Activated naive CD4-positive, alpha-beta T cell treated with anti-CD3 and anti-CD28 coated beads for 36 hours (primary cell): ENCODE measurements at regions of chr5 and their contacts with region 1.

Region 1: DNA sequence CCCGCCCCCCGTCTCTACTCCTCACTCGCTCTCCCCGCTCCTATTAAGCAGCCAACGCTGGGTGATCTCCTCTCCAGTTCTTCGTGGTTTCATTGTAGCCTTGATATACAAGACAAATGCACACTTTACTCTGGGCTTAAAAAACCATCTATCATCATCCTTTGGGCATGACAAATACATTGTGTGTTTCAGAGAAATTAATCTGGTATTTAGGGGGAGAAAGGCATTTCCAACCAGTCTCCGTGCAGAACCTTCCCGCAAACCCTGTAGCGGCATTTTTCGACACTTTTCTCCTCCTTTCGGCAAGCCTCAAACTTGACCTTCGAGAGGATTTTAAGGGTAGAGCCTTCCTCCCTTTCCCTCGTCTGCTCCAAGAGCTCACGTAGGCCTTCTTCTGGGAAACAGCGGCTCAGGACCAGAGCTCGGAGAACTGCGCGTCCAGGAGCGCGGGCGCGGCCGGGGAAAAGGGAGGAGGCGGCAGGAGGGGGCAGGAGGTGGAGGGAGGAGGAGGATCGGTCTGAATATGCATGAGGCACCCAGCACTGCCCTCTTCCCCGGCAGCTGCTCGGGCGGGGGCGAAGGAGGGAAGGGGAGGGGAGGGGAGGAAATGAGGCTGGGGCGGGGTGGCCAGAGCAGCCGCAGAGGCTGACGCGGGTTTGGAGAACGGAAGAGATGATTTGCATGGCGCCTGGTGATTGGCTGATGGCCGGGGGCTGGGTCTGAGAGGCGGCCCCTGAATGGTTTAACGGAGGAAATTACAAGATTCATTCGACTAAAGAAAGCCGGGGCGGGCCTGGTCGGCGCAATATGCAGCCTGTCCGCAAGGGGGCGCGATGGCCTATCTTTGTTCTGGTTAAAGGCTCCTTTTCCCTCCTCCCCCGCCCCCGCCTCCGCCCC is 127.5 kb downstream of the TMEM161B start:
- DNase-seq: peak; percentile 93
- H3K4me3 Mint-ChIP-seq: no peak overlapping the region
- H3K27ac Mint-ChIP-seq: no peak overlapping the region
- H3K4me1 Mint-ChIP-seq: peaks cover 9% of the 10 kb centered on the region
- H3K27me3 Mint-ChIP-seq: peaks cover 43% of the 10 kb centered on the region

Region 2: GRCh38 chr5:86617756-86618576 is 1523.1 kb before region 1 on chr5 and contains the start of gene COX7C:
- CTCF ChIA-PET with region 1: no interaction called
- intact Hi-C with region 1: loop called (anchors 10 kb)
- DNase-seq: peak; percentile 96
- H3K4me3 Mint-ChIP-seq: peak within 1 kb of the TSS; percentile 100
- H3K27ac Mint-ChIP-seq: peak within 1 kb of the TSS; percentile 99
- H3K4me1 Mint-ChIP-seq: peaks cover 21% of the 10 kb centered on the region
- H3K27me3 Mint-ChIP-seq: peaks cover 2% of the 10 kb centered on the region
- total RNA-seq, gene COX7C: 925 to 952 TPM

Region 3: DNA sequence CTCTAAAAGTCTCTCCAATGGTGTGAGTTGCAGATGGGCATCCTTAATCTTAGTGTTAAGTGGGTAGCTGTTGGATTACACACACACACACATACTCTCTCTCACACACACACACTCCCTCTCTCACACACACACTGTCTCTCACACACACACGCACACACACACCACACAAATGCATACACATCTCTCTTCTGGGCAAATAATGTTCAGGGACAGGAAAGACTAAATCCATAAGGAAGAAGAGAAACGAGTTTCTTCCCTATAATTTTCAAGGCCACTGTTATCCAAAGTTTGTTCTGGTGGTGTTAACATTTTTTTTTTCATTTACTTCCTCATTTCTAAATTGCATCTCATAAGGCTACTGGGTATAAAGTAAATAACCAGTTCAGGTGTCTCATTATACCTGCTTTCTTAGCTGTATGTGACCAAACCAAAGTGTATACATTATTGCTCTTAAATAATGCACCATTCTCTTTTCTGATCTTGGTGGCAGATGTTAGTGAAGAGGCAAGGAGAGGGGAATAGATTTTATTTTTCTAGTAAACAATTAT is 705.9 kb before region 1 on chr5:
- CTCF ChIA-PET with region 1: no interaction called
- intact Hi-C with region 1: no loop called
- DNase-seq: no peak
- H3K4me3 Mint-ChIP-seq: no peak overlapping the region
- H3K27ac Mint-ChIP-seq: no peak overlapping the region
- H3K4me1 Mint-ChIP-seq: no peaks in the 10 kb centered on the region
- H3K27me3 Mint-ChIP-seq: peaks cover 5% of the 10 kb centered on the region

Region 4: DNA sequence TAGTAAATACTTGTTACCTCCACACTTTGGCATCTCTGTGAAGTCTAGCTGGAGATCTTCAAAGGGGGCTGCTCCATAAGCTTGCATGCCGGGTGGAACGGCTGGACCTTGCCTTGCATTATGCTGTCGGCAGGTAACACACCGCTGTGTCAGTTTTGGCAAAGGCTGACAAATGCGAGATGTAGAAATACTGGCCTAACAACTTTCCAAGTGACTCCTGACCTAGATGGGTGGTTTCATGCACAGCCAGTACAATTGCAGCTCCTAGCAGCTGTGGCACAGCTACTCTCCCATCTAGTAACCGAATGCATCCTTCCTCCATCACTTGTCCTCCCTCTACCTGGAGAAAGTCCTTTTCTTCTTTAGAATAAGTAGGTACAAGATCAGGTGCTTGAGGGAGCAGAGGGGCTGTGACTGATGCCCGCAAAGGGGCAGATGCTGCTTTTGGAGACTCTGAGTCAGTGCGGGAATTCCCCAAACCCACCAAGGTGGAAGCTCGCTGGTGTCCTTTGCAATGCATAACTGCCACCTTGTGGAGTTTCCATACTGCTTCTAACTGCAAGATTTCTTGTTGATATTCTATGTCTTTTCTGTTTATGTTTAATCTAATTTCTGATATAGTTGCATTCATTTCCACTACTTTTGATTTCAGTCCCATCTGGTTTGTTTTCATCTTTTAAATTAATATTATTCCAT is 49.2 kb after region 1 on chr5:
- CTCF ChIA-PET with region 1: no interaction called
- intact Hi-C with region 1: loop called (anchors 2 kb)
- DNase-seq: peak; percentile 15
- H3K4me3 Mint-ChIP-seq: no peak overlapping the region
- H3K27ac Mint-ChIP-seq: no peak overlapping the region
- H3K4me1 Mint-ChIP-seq: no peaks in the 10 kb centered on the region
- H3K27me3 Mint-ChIP-seq: no peaks in the 10 kb centered on the region

Region 5: GRCh38 chr5:88405783-88406182 is 264.7 kb after region 1 on chr5:
- CTCF ChIA-PET with region 1: no interaction called
- intact Hi-C with region 1: no loop called
- DNase-seq: no peak
- H3K4me3 Mint-ChIP-seq: no peak overlapping the region
- H3K27ac Mint-ChIP-seq: no peak overlapping the region
- H3K4me1 Mint-ChIP-seq: no peaks in the 10 kb centered on the region
- H3K27me3 Mint-ChIP-seq: peaks cover 6% of the 10 kb centered on the region

Region 6: DNA sequence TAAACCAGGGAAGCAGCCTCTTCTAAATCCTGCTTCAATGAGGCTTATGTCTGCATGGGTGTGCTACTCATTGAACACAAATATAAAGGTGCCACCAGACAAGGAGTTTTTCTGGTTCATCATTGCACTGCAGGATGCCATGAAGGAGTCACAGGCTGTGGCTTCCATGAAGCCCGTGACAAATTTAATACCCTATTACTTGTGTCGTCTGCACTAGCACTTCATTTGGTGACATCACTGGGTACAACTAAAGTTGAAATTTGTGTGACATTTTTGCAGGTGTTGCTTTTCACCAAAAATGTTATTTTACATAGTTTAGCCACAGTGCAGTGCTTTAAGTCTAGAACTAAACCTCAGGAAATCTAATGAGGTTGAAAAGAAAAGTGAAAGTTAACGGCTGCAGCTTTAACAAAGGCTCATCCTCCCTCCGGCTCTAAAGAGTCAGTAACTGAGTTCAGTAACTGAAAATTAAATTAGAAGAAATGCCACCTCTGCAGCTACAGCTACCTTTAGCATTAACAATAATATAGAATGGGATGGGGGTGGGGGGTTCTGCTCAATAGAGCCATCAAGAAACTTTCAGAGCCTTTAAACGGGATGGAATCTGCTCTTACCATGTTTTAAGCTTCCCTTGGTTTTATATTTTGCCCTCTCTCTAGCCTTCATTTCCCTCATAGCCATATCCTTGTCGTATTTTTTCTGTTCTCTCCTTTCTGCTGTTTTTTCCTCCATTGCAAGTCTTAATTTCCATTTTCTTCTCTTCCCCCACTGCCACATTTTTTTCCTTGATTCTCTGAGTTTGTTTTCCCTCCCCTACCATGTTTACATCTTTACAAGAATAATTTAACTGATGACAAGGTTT is 361.3 kb after region 1 on chr5:
- CTCF ChIA-PET with region 1: no interaction called
- intact Hi-C with region 1: loop called (anchors 1 kb)
- DNase-seq: peak; percentile 20
- H3K4me3 Mint-ChIP-seq: peak overlapping the region; percentile 78
- H3K27ac Mint-ChIP-seq: peak overlapping the region; percentile 77
- H3K4me1 Mint-ChIP-seq: peaks cover 3% of the 10 kb centered on the region
- H3K27me3 Mint-ChIP-seq: no peaks in the 10 kb centered on the region

Region 7: GRCh38 chr5:88680253-88681132 is 539.4 kb after region 1 on chr5:
- CTCF ChIA-PET with region 1: no interaction called
- intact Hi-C with region 1: loop called (anchors 1 kb)
- DNase-seq: peak; percentile 77
- H3K4me3 Mint-ChIP-seq: peak overlapping the region; percentile 43
- H3K27ac Mint-ChIP-seq: no peak overlapping the region
- H3K4me1 Mint-ChIP-seq: peaks cover 15% of the 10 kb centered on the region
- H3K27me3 Mint-ChIP-seq: peaks cover 73% of the 10 kb centered on the region

Region 8: DNA sequence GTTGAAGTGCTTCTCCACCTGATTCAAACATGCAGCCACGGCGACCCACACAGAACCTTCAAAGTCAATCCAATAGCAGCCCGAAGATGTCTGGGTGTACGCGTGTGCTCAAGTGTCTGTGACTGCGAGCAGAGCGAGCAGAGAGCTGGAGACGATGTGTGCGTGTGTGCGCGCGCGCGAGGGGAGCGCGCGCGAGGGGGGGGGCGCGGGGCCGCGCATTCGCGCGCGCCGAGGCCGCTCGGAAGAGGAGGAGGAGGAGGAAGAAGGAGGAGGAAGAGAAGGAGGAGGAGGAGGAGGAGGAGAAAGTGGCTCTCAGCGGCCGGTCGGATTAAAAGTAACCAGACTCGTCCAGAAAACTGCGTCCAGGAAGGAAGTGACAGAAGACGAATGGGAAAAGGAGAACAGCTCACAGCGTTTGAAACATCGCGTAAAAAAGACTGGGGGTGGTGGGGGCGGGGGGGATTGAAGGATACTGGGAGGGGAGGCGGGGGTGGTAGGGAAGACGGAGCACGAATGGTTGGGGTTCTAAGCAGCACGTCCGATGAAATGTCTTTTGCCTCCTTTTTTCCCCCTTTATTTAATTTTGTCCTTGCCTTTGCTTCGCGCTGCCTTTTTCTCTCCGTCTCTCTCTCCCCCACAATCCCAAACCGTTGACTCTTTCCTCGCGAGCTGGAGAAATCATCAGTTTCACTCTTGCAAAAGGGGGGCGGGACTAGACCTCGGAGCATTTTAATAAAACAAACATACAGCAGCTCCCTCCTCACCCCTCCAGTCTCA is 742.1 kb after region 1 on chr5 and contains the start of gene MEF2C:
- CTCF ChIA-PET with region 1: no interaction called
- intact Hi-C with region 1: loop called (anchors 10 kb)
- DNase-seq: peak; percentile 12
- H3K4me3 Mint-ChIP-seq: peak within 1 kb of the TSS; percentile 76
- H3K27ac Mint-ChIP-seq: no peak within 1 kb of the TSS
- H3K4me1 Mint-ChIP-seq: peaks cover 20% of the 10 kb centered on the region
- H3K27me3 Mint-ChIP-seq: peaks cover 57% of the 10 kb centered on the region
- total RNA-seq, gene MEF2C: not detected